Naive thymus-derived CD4-positive, alpha-beta T cell (primary cell): ENCODE measurements at regions of chr13 and their contacts with region 1.

Region 1: GRCh38 chr13:105346141-105346775 is 1189.2 kb downstream of the EFNB2 start:
- DNase-seq: no peak
- ATAC-seq: no peak
- H3K4me3 ChIP-seq: no peak overlapping the region
- H3K4me3 Mint-ChIP-seq: no peak overlapping the region
- H3K27ac ChIP-seq: no peak overlapping the region
- H3K27ac Mint-ChIP-seq: no peak overlapping the region
- H3K4me1 ChIP-seq: no peaks in the 10 kb centered on the region
- H3K4me1 Mint-ChIP-seq: no peaks in the 10 kb centered on the region
- H3K27me3 ChIP-seq: no peaks in the 10 kb centered on the region
- H3K27me3 Mint-ChIP-seq: peaks cover 0 to 5% (median 0%) of the 10 kb centered on the region in 5 donors

Region 2: GRCh38 chr13:105089858-105090643 is 256.2 kb before region 1 on chr13:
- CTCF ChIA-PET with region 1: no interaction called
- POLR2A ChIA-PET with region 1: no interaction called
- intact Hi-C with region 1: loop called in 1 of 2 experiments (anchors 10 kb)
- DNase-seq: no peak
- ATAC-seq: no peak
- H3K4me3 ChIP-seq: no peak overlapping the region
- H3K4me3 Mint-ChIP-seq: no peak overlapping the region
- H3K27ac ChIP-seq: no peak overlapping the region
- H3K27ac Mint-ChIP-seq: no peak overlapping the region
- H3K4me1 ChIP-seq: no peaks in the 10 kb centered on the region
- H3K4me1 Mint-ChIP-seq: no peaks in the 10 kb centered on the region
- H3K27me3 ChIP-seq: no peaks in the 10 kb centered on the region
- H3K27me3 Mint-ChIP-seq: peaks cover 0 to 14% (median 10%) of the 10 kb centered on the region in 5 donors

Region 3: GRCh38 chr13:105513448-105513847 is 167.2 kb after region 1 on chr13:
- CTCF ChIA-PET with region 1: no interaction called
- POLR2A ChIA-PET with region 1: no interaction called
- intact Hi-C with region 1: no loop called
- DNase-seq: no peak
- ATAC-seq: no peak
- H3K4me3 ChIP-seq: no peak overlapping the region
- H3K4me3 Mint-ChIP-seq: no peak overlapping the region
- H3K27ac ChIP-seq: no peak overlapping the region
- H3K27ac Mint-ChIP-seq: no peak overlapping the region
- H3K4me1 ChIP-seq: no peaks in the 10 kb centered on the region
- H3K4me1 Mint-ChIP-seq: no peaks in the 10 kb centered on the region
- H3K27me3 ChIP-seq: no peaks in the 10 kb centered on the region
- H3K27me3 Mint-ChIP-seq: peaks cover 0 to 8% (median 0%) of the 10 kb centered on the region in 5 donors

Region 4: GRCh38 chr13:105763851-105764250 is 417.6 kb after region 1 on chr13:
- CTCF ChIA-PET with region 1: no interaction called
- POLR2A ChIA-PET with region 1: no interaction called
- intact Hi-C with region 1: no loop called
- DNase-seq: no peak
- ATAC-seq: no peak
- H3K4me3 ChIP-seq: no peak overlapping the region
- H3K4me3 Mint-ChIP-seq: no peak overlapping the region
- H3K27ac ChIP-seq: no peak overlapping the region
- H3K27ac Mint-ChIP-seq: no peak overlapping the region
- H3K4me1 ChIP-seq: no peaks in the 10 kb centered on the region
- H3K4me1 Mint-ChIP-seq: no peaks in the 10 kb centered on the region
- H3K27me3 ChIP-seq: no peaks in the 10 kb centered on the region
- H3K27me3 Mint-ChIP-seq: peaks cover 0 to 7% (median 0%) of the 10 kb centered on the region in 5 donors